CD8-positive, alpha-beta T cell (primary cell): ENCODE measurements at regions of chr3 and their contacts with region 1.

Region 1: GRCh38 chr3:132716372-132716771 is 5.8 kb downstream of the NPHP3 start:
- DNase-seq: no peak
- ATAC-seq: no peak
- H3K4me3 ChIP-seq: no peak overlapping the region
- H3K4me3 Mint-ChIP-seq: no peak overlapping the region
- H3K27ac ChIP-seq: no peak overlapping the region
- H3K27ac Mint-ChIP-seq: no peak overlapping the region
- H3K4me1 ChIP-seq: peaks cover 14% of the 10 kb centered on the region
- H3K4me1 Mint-ChIP-seq: peaks cover 41% of the 10 kb centered on the region
- H3K27me3 ChIP-seq: no peaks in the 10 kb centered on the region
- H3K27me3 Mint-ChIP-seq: no peaks in the 10 kb centered on the region
- CTCF ChIP-seq: no peak

Region 2: DNA sequence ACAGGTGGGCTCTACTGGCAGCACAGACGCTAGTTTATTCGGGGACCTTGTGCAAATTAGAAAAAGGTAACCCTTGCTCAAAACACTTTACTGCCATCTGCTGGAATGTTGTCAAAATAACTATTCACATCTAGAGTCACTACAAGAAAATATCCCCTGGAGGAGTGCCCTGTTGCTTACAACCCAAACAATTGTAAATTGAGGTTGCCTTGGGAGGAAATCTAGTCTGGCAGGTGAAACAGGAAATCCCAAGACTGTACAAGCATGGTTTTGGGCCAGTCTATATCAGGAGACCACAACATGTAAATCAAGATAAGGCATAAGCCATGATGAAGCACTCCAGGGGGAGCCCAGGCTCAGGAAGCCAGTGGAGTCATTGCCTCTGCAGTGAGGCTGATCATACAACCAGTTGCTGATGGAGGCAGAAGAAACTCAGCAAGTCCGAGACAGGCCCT is 536.0 kb before region 1 on chr3:
- CTCF ChIA-PET with region 1: no interaction called
- POLR2A ChIA-PET with region 1: no interaction called
- intact Hi-C with region 1: no loop called
- DNase-seq: peak in 2 of 9 experiments; percentile 37 to 52
- ATAC-seq: no peak
- H3K4me3 ChIP-seq: no peak overlapping the region
- H3K4me3 Mint-ChIP-seq: no peak overlapping the region
- H3K27ac ChIP-seq: no peak overlapping the region
- H3K27ac Mint-ChIP-seq: no peak overlapping the region
- H3K4me1 ChIP-seq: no peaks in the 10 kb centered on the region
- H3K4me1 Mint-ChIP-seq: peaks cover 5% of the 10 kb centered on the region
- H3K27me3 ChIP-seq: no peaks in the 10 kb centered on the region
- H3K27me3 Mint-ChIP-seq: no peaks in the 10 kb centered on the region
- CTCF ChIP-seq: peak; percentile 30

Region 3: DNA sequence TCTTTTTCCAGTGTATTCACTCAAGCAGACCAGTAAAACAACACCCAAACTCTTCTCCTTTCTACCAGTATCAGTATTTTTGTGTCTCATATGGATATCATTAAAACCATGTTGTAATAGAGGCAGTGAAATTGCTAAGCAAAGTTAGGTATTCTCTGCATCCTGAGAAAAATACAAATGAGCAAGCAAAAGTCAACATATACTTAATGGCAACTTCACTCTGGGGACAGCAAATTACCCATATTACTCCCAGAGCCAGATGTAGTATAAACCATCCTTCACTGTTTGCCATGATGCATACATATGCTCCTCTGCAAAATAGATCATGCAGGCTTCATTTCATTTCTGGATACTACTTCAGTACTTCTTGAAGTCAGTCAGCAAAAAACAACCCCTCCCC is 34.2 kb before region 1 on chr3:
- CTCF ChIA-PET with region 1: no interaction called
- POLR2A ChIA-PET with region 1: no interaction called
- intact Hi-C with region 1: loop called in 1 of 2 experiments (anchors 5 kb)
- DNase-seq: no peak
- ATAC-seq: no peak
- H3K4me3 ChIP-seq: no peak overlapping the region
- H3K4me3 Mint-ChIP-seq: no peak overlapping the region
- H3K27ac ChIP-seq: no peak overlapping the region
- H3K27ac Mint-ChIP-seq: peak overlapping the region; percentile 20
- H3K4me1 ChIP-seq: no peaks in the 10 kb centered on the region
- H3K4me1 Mint-ChIP-seq: no peaks in the 10 kb centered on the region
- H3K27me3 ChIP-seq: no peaks in the 10 kb centered on the region
- H3K27me3 Mint-ChIP-seq: no peaks in the 10 kb centered on the region
- CTCF ChIP-seq: no peak